Breast epithelium (tissue), 4 donors: ENCODE measurements at regions of chr9 and their contacts with region 1.

Region 1: GRCh38 chr9:30982301-30982700 is 1402.1 kb upstream of the ACO1 start:
- DNase-seq: no peak
- H3K4me3 ChIP-seq: no peak overlapping the region
- H3K27ac ChIP-seq: no peak overlapping the region
- H3K4me1 ChIP-seq: no peaks in the 10 kb centered on the region
- H3K27me3 ChIP-seq: no peaks in the 10 kb centered on the region
- CTCF ChIP-seq: no peak
- POLR2A ChIP-seq: no peak

Region 2: DNA sequence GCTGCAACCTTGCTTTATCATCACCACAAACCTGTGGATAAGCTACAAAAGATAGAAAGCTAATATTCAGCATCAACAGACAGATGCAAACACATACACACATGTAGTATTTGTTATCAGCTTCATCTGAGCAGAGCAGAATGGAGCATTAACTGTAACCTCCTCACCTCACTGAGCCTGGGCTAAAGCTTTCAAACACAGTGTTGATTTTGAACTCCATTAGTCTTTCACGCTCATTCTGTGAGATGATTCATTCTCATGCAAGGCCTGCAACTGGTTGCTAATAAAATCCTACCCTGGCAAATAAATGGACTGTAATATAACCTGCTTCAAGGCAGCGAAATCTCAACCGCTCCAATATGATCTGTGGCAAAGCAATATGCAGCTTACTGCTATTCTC is 41.5 kb after region 1 on chr9:
- intact Hi-C with region 1: loop called (anchors 2 kb)
- DNase-seq: no peak
- H3K4me3 ChIP-seq: no peak overlapping the region
- H3K27ac ChIP-seq: no peak overlapping the region
- H3K4me1 ChIP-seq: no peaks in the 10 kb centered on the region
- H3K27me3 ChIP-seq: no peaks in the 10 kb centered on the region
- CTCF ChIP-seq: no peak
- POLR2A ChIP-seq: no peak